ENCODE measurements at regions of chrX and their contacts with region 1.

Region 1: GRCh38 chrX:56729152-56729850 is at the start of gene NBDY:
- DNase-seq: no peak
- ATAC-seq: peak; percentile 91
- H3K4me3 ChIP-seq: peak within 1 kb of the TSS; percentile 62 to 77
- H3K27ac ChIP-seq: peak within 1 kb of the TSS; percentile 62
- H3K4me1 ChIP-seq: peaks cover 0 to 8% of the 10 kb centered on the region in 2 experiments; a peak in 2 of 4 replicates
- H3K27me3 ChIP-seq: no peaks in the 10 kb centered on the region
- CTCF ChIP-seq: no peak
- POLR2A ChIP-seq: no peak
- RAD21 ChIP-seq: no peak
- total RNA-seq, gene NBDY: 65.6 TPM

Region 2: DNA sequence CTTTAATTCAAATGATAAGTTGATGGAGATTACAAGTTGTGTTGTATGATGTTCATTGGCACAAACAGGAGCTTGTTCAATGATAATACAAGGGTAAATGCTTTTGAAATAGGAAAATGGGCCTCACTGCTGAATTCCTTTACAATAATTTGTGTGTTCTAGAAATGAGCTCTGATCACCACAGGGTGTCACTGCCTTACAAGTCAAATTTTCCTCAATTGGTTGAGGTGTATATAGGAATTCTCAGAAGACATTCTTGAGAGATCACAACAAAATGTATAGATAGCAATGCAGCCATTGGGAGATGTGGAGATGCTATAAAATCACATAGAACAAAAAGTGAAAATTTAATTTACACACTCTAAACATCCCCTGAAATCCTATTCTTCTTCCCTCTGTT is 447.5 kb before region 1 on chrX:
- CTCF ChIA-PET with region 1: interaction called, 23 read pairs
- POLR2A ChIA-PET with region 1: no interaction called
- RAD21 ChIA-PET with region 1: interaction called in 1 of 2 experiments, 4 read pairs
- intact Hi-C with region 1: loop called (anchors 2 kb)
- DNase-seq: peak; percentile 3
- ATAC-seq: no peak
- H3K4me3 ChIP-seq: no peak overlapping the region
- H3K27ac ChIP-seq: no peak overlapping the region
- H3K4me1 ChIP-seq: no peaks in the 10 kb centered on the region
- H3K27me3 ChIP-seq: no peaks in the 10 kb centered on the region
- CTCF ChIP-seq: peak; percentile 7 to 35 (median 12); a peak in 3 of 6 replicates
- POLR2A ChIP-seq: no peak
- RAD21 ChIP-seq: peak; percentile 57

Region 3: DNA sequence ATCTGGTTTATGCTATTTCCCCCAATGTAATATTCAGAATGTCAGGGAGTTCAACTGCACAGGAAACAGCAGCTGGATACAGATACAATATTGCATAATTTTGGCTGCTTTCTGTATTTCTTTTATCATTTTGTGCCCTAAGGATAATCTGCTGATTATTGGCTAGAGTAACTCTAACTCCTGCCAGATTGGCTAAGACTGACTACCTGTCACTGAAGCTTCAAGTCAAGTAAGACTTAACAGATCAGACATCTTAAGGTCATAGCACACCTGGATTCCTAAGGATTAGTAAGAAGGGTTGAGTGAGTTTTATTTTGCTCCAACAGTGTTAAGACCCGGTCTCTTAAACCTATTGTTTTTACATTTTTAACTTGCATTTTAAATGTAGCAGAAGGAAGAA is 360.3 kb before region 1 on chrX:
- CTCF ChIA-PET with region 1: no interaction called
- POLR2A ChIA-PET with region 1: no interaction called
- RAD21 ChIA-PET with region 1: no interaction called
- intact Hi-C with region 1: no loop called
- DNase-seq: no peak
- ATAC-seq: no peak
- H3K4me3 ChIP-seq: no peak overlapping the region
- H3K27ac ChIP-seq: no peak overlapping the region
- H3K4me1 ChIP-seq: no peaks in the 10 kb centered on the region
- H3K27me3 ChIP-seq: no peaks in the 10 kb centered on the region
- CTCF ChIP-seq: no peak
- POLR2A ChIP-seq: no peak
- RAD21 ChIP-seq: no peak

Region 4: GRCh38 chrX:56462389-56462788 is 266.9 kb before region 1 on chrX:
- CTCF ChIA-PET with region 1: no interaction called
- POLR2A ChIA-PET with region 1: no interaction called
- RAD21 ChIA-PET with region 1: no interaction called
- intact Hi-C with region 1: loop called (anchors 5 kb)
- DNase-seq: no peak
- ATAC-seq: no peak
- H3K4me3 ChIP-seq: no peak overlapping the region
- H3K27ac ChIP-seq: no peak overlapping the region
- H3K4me1 ChIP-seq: no peaks in the 10 kb centered on the region
- H3K27me3 ChIP-seq: no peaks in the 10 kb centered on the region; the same call in 1 of the 2 replicates
- CTCF ChIP-seq: 0 out of 6 replicates have a peak, but pooled peaks of 1 of the 3 experiments have one; percentile 21
- POLR2A ChIP-seq: no peak
- RAD21 ChIP-seq: peak; percentile 44

Region 5: DNA sequence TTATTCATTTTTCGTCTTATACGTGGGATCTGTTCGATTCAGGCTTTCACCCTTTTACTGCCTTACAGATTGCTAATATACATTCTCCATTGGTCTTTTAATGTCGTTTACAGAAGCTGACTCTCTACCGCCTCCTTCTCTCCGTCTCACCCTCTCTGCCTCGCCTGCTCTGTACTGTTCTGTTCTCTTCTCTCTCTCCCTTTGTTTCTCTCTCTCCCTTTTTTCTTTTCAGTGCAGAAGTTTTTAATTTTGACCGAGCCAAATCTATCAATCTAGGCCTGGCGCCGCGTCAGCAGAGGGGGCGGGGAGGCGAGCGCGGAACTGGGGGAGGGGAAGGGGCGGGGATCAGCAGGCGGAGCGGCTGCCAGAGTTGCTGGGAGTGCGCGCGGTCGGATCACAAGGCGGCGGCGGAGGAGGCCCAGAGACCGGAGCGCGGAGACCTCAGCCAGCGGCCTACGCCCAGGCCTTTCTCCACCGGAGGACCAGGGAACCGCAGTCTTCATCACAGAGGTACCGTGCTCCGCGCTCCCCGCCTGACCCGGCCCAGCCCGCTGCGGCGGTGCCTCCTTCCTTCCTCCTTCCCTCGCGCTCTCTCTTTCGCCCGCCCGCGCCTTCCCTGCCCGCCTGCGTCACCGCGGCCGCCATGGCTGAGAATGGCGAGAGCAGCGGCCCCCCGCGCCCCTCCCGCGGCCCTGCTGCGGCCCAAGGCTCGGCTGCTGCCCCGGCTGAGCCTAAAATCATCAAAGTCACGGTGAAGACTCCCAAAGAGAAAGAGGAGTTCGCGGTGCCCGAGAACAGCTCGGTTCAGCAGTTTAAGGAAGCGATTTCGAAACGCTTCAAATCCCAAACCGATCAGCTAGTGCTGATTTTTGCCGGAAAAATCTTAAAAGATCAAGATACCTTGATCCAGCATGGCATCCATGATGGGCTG is 165.8 kb before region 1 on chrX and contains the start of gene UBQLN2:
- CTCF ChIA-PET with region 1: no interaction called
- POLR2A ChIA-PET with region 1: no interaction called
- RAD21 ChIA-PET with region 1: no interaction called
- intact Hi-C with region 1: loop called (anchors 5 kb)
- DNase-seq: peak; percentile 31
- ATAC-seq: peak; percentile 92
- H3K4me3 ChIP-seq: peak within 1 kb of the TSS; percentile 62 to 77
- H3K27ac ChIP-seq: peak within 1 kb of the TSS; percentile 87
- H3K4me1 ChIP-seq: peaks cover 3 to 5% of the 10 kb centered on the region in 2 experiments
- H3K27me3 ChIP-seq: no peaks in the 10 kb centered on the region
- CTCF ChIP-seq: no peak; a peak in 1 of 6 replicates
- POLR2A ChIP-seq: no peak
- RAD21 ChIP-seq: no peak; the same call in 1 of the 2 replicates
- total RNA-seq, gene UBQLN2: 20.9 TPM